ENCODE measurements at regions of chr10 and their contacts with region 1.

Region 1: GRCh38 chr10:131981429-131982184 is at the start of gene BNIP3:
- DNase-seq: peak; percentile 94
- H3K4me3 ChIP-seq: peak within 1 kb of the TSS; percentile 87 to 100
- H3K27ac ChIP-seq: peak within 1 kb of the TSS; percentile 89 to 93
- H3K4me1 ChIP-seq: peaks cover 9% of the 10 kb centered on the region
- H3K27me3 ChIP-seq: no peaks in the 10 kb centered on the region
- CTCF ChIP-seq: peak in 1 of 4 experiments; percentile 21
- POLR2A ChIP-seq: peak; percentile 96
- total RNA-seq, gene BNIP3: 148 to 325 TPM

Region 2: DNA sequence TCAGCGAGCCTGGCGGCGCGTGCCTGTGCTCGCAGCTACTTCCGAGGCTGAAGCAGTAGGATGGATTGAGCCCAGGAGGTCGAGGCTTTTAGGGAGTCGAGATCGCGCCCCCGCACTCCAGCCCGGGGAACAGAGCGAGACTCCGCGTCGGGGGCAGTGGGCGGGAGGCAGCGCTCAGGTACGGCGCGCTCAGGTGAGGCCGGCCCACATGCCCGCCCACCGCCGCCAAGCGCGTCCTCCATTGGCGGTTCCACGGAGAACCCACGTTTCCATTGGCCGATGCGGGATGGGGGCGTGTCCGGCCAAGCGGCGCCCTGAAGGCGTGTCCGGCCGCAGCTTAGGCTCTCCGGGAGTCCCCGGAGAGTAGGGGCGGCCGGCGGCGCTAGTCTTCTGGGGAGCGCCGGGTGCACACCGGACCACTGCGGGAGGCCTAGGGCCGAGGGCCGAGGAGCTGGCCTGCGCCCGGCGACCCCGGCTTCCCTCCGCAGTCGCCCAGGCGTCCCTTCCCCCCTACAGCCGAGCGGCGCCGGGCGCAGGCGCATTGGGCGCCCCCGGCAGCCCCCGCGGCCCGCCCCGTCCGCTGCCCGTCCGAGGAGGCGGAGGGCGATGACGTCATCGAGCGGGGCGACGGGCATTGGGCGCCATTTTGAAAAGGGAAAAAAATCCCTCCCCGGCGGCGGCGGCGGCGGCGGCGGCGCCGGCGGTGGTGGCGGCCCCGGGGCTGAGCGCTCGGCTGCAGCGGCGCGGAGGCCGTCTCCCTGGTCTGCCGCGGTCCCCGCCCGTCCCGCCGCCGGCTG is 81.1 kb before region 1 on chr10 and contains the start of gene PPP2R2D:
- intact Hi-C with region 1: loop called (anchors 5 kb)
- DNase-seq: peak; percentile 95
- H3K4me3 ChIP-seq: peak within 1 kb of the TSS; percentile 77 to 92
- H3K27ac ChIP-seq: peak within 1 kb of the TSS; percentile 89 to 95
- H3K4me1 ChIP-seq: peaks cover 11% of the 10 kb centered on the region
- H3K27me3 ChIP-seq: no peaks in the 10 kb centered on the region
- CTCF ChIP-seq: peak in 2 of 4 experiments; percentile 18 to 25
- POLR2A ChIP-seq: peak; percentile 84
- total RNA-seq, gene PPP2R2D: 37.0 to 55.2 TPM

Measured in prostate gland (tissue), 2 donors.